Psoas muscle (tissue), 8 donors: ENCODE measurements at regions of chrX and their contacts with region 1.

Region 1: DNA sequence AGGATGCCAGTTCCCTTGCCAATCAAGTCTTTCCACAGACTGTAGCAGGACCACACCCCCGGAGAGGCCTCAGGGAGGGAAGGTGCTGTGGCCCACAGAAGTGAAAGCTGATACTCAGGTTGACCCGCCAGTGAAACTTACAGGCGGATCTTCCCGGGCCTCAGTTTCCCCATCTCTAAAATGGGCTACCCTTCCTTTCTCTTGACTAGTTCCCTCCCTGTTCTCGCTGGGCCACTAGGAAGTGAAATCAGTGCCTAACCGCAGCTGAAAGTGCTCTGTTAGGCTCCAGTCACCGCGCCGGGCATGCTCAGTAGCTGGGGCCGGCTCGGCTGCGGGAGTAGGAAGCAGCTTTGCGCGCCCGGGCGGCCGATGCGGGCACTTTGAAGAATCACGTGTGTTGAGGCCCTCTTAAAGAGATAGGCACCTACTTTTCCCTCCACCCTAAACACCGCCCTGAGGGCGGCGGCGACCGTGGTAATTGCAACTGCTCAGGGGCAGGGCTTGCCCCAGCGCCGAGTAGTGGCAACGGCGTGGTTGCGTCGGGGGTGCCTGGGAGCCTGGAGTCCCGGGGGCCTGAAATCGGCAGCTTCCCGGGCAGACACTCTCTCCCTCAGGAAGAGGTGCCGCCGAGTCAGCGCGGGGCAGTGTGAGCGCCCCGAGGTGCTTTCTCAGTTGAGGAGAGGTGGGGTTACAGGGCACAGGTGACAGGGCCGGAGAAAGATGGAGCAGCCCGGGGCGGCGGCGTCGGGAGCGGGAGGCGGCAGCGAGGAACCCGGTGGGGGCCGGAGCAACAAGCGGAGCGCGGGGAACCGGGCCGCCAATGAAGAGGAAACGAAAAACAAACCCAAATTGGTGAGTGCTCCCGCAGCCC is at the start of gene DIAPH2:
- DNase-seq: peak; percentile 76 to 89
- ATAC-seq: peak; percentile 92 to 97 (median 95)
- H3K4me3 ChIP-seq: peak within 1 kb of the TSS; percentile 73
- H3K27ac ChIP-seq: peak within 1 kb of the TSS; percentile 86
- H3K4me1 ChIP-seq: no peaks in the 10 kb centered on the region
- H3K27me3 ChIP-seq: peaks cover 0 to 42% (median 0%) of the 10 kb centered on the region in 3 donors
- CTCF ChIP-seq: peak; percentile 35
- total RNA-seq, gene DIAPH2: 9.7 to 19.2 (median 16.7) TPM

Region 2: GRCh38 chrX:96556886-96557285 is 127.7 kb before region 1 on chrX:
- intact Hi-C with region 1: loop called in 1 of 2 experiments (anchors 5 kb)
- DNase-seq: no peak
- ATAC-seq: no peak
- H3K4me3 ChIP-seq: peak overlapping the region; percentile 33
- H3K27ac ChIP-seq: no peak overlapping the region
- H3K4me1 ChIP-seq: no peaks in the 10 kb centered on the region
- H3K27me3 ChIP-seq: peaks cover 0 to 3% (median 0%) of the 10 kb centered on the region in 3 donors
- CTCF ChIP-seq: no peak

Region 3: DNA sequence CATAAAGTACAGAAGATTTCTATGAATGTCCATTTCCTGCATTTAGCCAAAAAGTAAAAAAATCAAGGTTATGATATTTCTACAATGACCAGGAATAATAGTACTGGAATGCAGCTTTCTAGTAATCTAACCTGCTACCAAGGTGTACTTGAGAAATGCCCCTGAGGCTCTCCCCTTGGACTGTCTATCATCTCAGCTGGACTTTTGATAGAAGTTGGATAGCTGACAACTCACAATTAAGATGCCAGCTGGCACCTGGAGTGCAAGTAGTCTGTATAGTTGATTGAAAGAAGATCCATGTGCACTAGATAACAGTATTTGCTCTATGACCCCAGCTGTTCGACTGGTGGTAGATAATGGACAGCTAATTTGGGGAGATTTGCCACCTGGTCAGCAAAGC is 209.0 kb after region 1 on chrX:
- intact Hi-C with region 1: no loop called
- DNase-seq: no peak
- ATAC-seq: no peak
- H3K4me3 ChIP-seq: no peak overlapping the region
- H3K27ac ChIP-seq: no peak overlapping the region
- H3K4me1 ChIP-seq: peaks cover 6% of the 10 kb centered on the region
- H3K27me3 ChIP-seq: no peaks in the 10 kb centered on the region
- CTCF ChIP-seq: no peak